ENCODE measurements at regions of chr7 and their contacts with region 1.

Region 1: GRCh38 chr7:73894733-73895551 is 34.0 kb downstream of the TMEM270 start:
- DNase-seq: no peak
- H3K4me3 ChIP-seq: no peak overlapping the region
- H3K27ac ChIP-seq: no peak overlapping the region
- H3K4me1 ChIP-seq: peaks cover 7% of the 10 kb centered on the region
- H3K27me3 ChIP-seq: no peaks in the 10 kb centered on the region
- CTCF ChIP-seq: no peak
- POLR2A ChIP-seq: no peak

Region 2: GRCh38 chr7:73992101-73992562 is 97.2 kb after region 1 on chr7:
- intact Hi-C with region 1: loop called (anchors 5 kb)
- DNase-seq: peak; percentile 39
- H3K4me3 ChIP-seq: no peak overlapping the region
- H3K27ac ChIP-seq: peak overlapping the region in 1 of 2 donors; percentile 19
- H3K4me1 ChIP-seq: no peaks in the 10 kb centered on the region
- H3K27me3 ChIP-seq: no peaks in the 10 kb centered on the region
- CTCF ChIP-seq: no peak
- POLR2A ChIP-seq: no peak